Psoas muscle (tissue), 8 donors: ENCODE measurements at regions of chr15 and their contacts with region 1.

Region 1: DNA sequence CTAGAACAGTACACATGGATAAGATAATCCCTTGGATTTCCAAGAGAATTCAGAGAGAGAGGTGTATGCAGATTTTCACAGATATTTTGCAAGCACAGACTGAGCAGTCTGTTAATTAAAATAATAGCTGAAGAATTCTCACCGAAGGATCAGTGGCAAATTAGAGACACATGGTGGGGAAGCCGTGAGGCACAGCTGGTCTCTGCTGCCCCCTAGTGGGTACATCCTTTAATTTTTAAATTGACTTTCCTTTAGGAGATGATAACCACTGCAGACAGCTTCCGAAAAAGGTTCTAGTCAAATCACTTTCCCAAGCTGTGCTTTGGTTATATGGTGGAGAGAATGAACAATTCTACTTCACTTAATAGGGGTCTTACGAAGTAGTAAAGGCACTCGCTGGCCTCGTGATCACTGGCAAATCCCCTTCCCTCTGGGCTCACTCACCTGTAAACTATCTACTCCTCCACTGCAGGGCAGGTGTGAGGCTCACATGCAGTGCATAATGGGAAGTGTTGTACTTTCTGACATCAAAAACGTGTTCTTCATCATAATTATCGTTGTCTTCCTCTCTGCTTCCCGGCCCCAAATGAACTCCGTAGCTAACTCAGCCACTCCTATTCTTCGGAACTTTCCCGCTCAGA is 19.5 kb downstream of the MESD start:
- DNase-seq: peak in 1 of 2 donors; percentile 42
- ATAC-seq: peak; percentile 68 to 85 (median 72)
- H3K4me3 ChIP-seq: no peak overlapping the region
- H3K27ac ChIP-seq: no peak overlapping the region
- H3K4me1 ChIP-seq: peaks cover 3% of the 10 kb centered on the region
- H3K27me3 ChIP-seq: no peaks in the 10 kb centered on the region
- CTCF ChIP-seq: peak; percentile 91

Region 2: GRCh38 chr15:80455668-80456442 is 514.3 kb before region 1 on chr15:
- intact Hi-C with region 1: loop called (anchors 2 to 5 kb)
- DNase-seq: no peak
- ATAC-seq: peak; percentile 77 to 92 (median 80)
- H3K4me3 ChIP-seq: no peak overlapping the region
- H3K27ac ChIP-seq: no peak overlapping the region
- H3K4me1 ChIP-seq: no peaks in the 10 kb centered on the region
- H3K27me3 ChIP-seq: no peaks in the 10 kb centered on the region
- CTCF ChIP-seq: peak; percentile 94

Region 3: DNA sequence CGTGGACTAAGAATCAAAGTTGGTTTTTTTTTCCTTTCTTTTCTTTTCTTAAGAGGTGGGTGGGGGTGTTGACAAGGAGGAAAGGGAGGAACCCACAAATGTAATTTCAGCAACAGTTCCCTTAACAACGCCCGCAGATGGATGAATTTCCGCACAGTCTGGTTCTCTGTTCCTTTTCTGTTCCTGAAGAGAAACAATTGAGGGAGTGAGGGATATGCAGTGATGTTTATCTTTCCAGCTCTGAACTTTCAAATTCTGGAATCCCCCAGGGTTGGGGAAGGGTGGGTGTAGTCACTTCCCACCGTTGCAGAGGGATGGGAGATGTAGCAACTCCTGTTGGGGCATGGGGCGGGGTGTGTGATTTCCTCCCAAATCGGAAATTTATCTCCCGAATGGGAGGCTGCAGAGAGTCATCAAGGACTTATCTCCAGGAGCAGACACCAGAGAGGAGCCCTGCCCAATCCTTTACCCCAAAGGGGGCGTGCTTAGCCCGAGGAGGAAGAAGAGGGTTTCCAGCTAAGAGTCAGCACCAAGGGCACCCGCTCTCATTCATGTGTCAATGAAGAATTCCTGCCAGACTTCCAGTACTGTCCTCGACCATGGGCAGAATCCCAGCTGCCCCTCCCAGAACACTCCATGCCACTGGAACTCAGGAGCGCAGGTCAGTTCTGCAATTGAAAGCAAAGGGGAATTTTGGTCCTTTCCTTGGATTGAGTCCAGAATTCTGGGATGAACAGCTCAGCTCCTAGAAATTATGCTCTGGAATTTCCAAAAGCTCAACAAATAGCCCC is 128.9 kb after region 1 on chr15:
- intact Hi-C with region 1: no loop called
- DNase-seq: peak; percentile 23 to 51
- ATAC-seq: peak in 3 of 4 donors; percentile 31 to 54 (median 42)
- H3K4me3 ChIP-seq: no peak overlapping the region
- H3K27ac ChIP-seq: no peak overlapping the region
- H3K4me1 ChIP-seq: peaks cover 6% of the 10 kb centered on the region
- H3K27me3 ChIP-seq: peaks cover 0 to 4% (median 0%) of the 10 kb centered on the region in 3 donors
- CTCF ChIP-seq: no peak